CD4-positive, alpha-beta T cell (primary cell): ENCODE measurements at regions of chr6 and their contacts with region 1.

Region 1: GRCh38 chr6:26025894-26026832 is 61.1 kb upstream of the HFE start:
- DNase-seq: peak; percentile 75 to 98 (median 88)
- ATAC-seq: peak; percentile 45
- H3K4me3 ChIP-seq: peak overlapping the region; percentile 70
- H3K4me3 Mint-ChIP-seq: peak overlapping the region; percentile 90
- H3K27ac ChIP-seq: peak overlapping the region; percentile 86 to 88
- H3K27ac Mint-ChIP-seq: peak overlapping the region; percentile 97
- H3K4me1 ChIP-seq: peaks cover 34% of the 10 kb centered on the region
- H3K4me1 Mint-ChIP-seq: peaks cover 42% of the 10 kb centered on the region
- H3K27me3 ChIP-seq: no peaks in the 10 kb centered on the region
- H3K27me3 Mint-ChIP-seq: no peaks in the 10 kb centered on the region
- CTCF ChIP-seq: peak; percentile 86

Region 2: DNA sequence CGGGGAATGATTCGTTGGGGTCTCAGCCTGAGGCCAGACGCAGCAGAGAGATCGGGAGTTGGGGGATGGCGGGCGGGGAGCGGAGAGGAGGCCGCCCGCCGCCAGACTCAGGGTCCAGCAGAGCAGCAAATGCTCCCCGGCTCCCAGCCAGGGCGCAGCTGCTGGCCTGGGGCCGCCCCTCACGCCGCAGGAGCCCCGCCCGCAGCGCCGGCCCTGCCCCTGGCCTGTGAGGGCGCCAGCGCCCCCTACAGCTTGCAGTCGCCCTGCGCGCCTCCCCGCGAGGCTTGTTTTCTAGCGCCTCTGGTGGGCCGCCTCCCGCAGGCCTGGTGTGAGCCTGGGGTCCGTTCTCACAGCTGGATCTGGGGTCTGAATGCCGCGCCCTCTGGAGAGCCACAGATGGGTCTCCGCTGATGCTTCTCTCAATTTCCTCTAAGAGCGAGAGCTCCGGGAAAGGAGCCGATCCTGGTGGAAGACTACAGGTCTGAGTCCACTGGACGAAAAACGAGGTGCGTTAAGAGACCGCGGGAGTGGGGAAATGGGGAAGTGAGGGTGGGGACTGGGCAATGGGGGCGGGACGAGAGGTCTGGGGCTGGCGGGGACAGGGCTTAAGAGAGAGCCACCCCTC is 33.6 kb before region 1 on chr6:
- CTCF ChIA-PET with region 1: interaction called, 62 read pairs
- POLR2A ChIA-PET with region 1: interaction called, 103 read pairs
- intact Hi-C with region 1: no loop called
- DNase-seq: peak; percentile 84 to 96 (median 93)
- ATAC-seq: peak; percentile 95
- H3K4me3 ChIP-seq: peak overlapping the region; percentile 55
- H3K4me3 Mint-ChIP-seq: peak overlapping the region; percentile 97
- H3K27ac ChIP-seq: peak overlapping the region; percentile 31 to 69
- H3K27ac Mint-ChIP-seq: peak overlapping the region; percentile 97
- H3K4me1 ChIP-seq: peaks cover 15% of the 10 kb centered on the region
- H3K4me1 Mint-ChIP-seq: peaks cover 37% of the 10 kb centered on the region
- H3K27me3 ChIP-seq: no peaks in the 10 kb centered on the region
- H3K27me3 Mint-ChIP-seq: no peaks in the 10 kb centered on the region
- CTCF ChIP-seq: peak; percentile 100

Region 3: DNA sequence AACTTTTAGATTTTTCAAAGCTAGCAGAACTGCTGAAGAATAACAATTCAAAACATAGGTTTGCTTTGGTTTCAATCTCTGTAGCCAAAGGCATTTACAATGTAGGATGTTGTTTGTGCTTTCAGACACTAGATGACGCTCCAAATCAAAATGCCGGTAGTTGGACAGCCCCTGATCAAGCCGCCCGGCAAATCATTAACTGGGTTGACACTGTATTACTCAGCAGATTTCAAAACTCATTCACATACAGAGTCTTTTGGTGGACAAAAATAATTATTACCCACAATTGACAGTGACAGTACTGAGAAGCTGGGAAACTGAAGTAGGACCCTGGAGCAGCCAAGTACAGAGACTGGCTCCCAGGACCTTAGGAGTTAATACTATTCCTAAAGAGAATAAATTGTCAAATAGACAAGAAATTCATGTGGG is 39.8 kb after region 1 on chr6:
- CTCF ChIA-PET with region 1: interaction called, 10 read pairs
- POLR2A ChIA-PET with region 1: interaction called, 7 read pairs
- intact Hi-C with region 1: loop called in 1 of 2 experiments (anchors 5 kb)
- DNase-seq: peak in 11 of 14 experiments; percentile 14 to 87 (median 39)
- ATAC-seq: peak; percentile 93
- H3K4me3 ChIP-seq: no peak overlapping the region
- H3K4me3 Mint-ChIP-seq: no peak overlapping the region
- H3K27ac ChIP-seq: no peak overlapping the region
- H3K27ac Mint-ChIP-seq: no peak overlapping the region
- H3K4me1 ChIP-seq: peaks cover 3% of the 10 kb centered on the region
- H3K4me1 Mint-ChIP-seq: peaks cover 11% of the 10 kb centered on the region
- H3K27me3 ChIP-seq: no peaks in the 10 kb centered on the region
- H3K27me3 Mint-ChIP-seq: no peaks in the 10 kb centered on the region
- CTCF ChIP-seq: peak; percentile 85

Region 4: DNA sequence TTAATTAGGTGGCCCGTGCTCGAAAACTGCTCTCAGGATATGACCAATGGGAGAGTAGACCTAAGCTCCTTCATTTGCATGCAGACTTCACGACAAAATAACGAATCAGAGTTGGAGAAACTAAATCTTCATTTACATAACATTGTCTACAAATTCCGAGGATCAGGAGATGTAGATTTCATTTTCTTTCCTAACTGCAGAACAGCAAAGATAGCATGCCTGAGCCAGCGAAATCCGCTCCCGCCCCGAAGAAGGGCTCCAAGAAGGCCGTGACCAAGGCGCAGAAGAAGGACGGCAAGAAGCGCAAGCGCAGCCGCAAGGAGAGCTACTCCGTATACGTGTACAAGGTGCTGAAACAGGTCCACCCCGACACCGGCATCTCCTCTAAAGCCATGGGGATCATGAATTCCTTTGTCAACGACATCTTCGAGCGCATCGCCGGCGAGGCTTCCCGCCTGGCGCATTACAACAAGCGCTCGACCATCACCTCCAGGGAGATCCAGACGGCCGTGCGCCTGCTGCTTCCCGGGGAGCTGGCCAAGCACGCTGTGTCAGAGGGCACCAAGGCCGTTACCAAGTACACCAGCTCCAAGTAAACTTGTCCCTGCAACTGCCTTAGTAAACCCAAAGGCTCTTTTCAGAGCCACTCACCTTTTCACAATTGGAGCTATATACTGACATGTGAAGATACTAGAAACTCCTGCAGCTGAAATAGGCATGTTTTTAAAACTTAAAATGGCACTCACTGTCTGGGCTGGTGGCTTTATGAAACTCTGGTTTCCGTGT is 157.6 kb after region 1 on chr6:
- CTCF ChIA-PET with region 1: no interaction called
- POLR2A ChIA-PET with region 1: interaction called, 22 read pairs
- intact Hi-C with region 1: no loop called
- DNase-seq: peak in 13 of 14 experiments; percentile 20 to 94 (median 48)
- ATAC-seq: peak; percentile 89
- H3K4me3 ChIP-seq: peak overlapping the region; percentile 62
- H3K4me3 Mint-ChIP-seq: peak overlapping the region; percentile 99
- H3K27ac ChIP-seq: peak overlapping the region; percentile 43 to 72
- H3K27ac Mint-ChIP-seq: peak overlapping the region; percentile 86
- H3K4me1 ChIP-seq: peaks cover 34% of the 10 kb centered on the region
- H3K4me1 Mint-ChIP-seq: peaks cover 42% of the 10 kb centered on the region
- H3K27me3 ChIP-seq: no peaks in the 10 kb centered on the region
- H3K27me3 Mint-ChIP-seq: no peaks in the 10 kb centered on the region
- CTCF ChIP-seq: no peak

Region 5: GRCh38 chr6:26285143-26286134 is 259.3 kb after region 1 on chr6:
- CTCF ChIA-PET with region 1: no interaction called
- POLR2A ChIA-PET with region 1: interaction called, 10 read pairs
- intact Hi-C with region 1: no loop called
- DNase-seq: peak; percentile 85 to 99 (median 92)
- ATAC-seq: peak; percentile 82
- H3K4me3 ChIP-seq: peak overlapping the region; percentile 62
- H3K4me3 Mint-ChIP-seq: peak overlapping the region; percentile 87
- H3K27ac ChIP-seq: peak overlapping the region; percentile 82 to 85
- H3K27ac Mint-ChIP-seq: peak overlapping the region; percentile 96
- H3K4me1 ChIP-seq: peaks cover 16% of the 10 kb centered on the region
- H3K4me1 Mint-ChIP-seq: peaks cover 24% of the 10 kb centered on the region
- H3K27me3 ChIP-seq: no peaks in the 10 kb centered on the region
- H3K27me3 Mint-ChIP-seq: peaks cover 11% of the 10 kb centered on the region
- CTCF ChIP-seq: no peak

Region 6: DNA sequence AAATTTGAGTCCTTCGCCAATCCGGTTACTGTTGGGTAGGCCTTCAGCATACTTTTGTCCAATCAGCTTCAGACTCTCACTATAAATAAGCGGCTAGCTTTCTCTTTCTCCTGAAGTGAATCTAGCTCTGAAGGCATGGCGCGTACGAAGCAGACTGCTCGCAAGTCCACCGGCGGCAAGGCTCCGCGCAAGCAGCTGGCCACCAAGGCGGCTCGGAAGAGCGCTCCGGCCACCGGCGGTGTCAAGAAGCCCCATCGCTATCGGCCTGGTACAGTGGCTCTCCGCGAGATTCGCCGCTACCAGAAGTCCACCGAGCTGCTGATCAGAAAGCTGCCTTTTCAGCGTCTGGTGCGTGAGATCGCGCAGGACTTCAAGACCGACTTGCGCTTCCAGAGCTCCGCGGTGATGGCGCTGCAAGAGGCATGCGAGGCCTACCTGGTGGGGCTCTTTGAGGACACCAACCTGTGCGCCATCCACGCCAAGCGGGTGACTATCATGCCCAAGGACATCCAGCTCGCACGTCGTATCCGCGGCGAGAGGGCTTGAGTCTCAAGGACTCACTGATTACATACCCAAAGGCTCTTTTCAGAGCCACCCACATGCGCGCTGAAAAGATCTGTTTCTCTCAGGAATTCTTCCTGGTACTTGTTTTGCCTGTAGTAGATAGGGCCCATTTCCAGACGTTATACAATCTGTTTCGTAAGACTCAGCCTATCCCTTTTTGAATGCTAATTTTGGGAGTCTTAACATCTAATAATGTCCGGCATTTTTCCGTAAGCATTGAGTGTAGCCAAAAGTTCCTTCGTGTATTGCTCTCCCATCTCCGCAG is 1784.0 kb after region 1 on chr6:
- CTCF ChIA-PET with region 1: no interaction called
- POLR2A ChIA-PET with region 1: interaction called, 61 read pairs
- intact Hi-C with region 1: loop called in 1 of 2 experiments (anchors 5 kb)
- DNase-seq: peak; percentile 63 to 98 (median 75)
- ATAC-seq: peak; percentile 61
- H3K4me3 ChIP-seq: peak overlapping the region; percentile 64
- H3K4me3 Mint-ChIP-seq: peak overlapping the region; percentile 95
- H3K27ac ChIP-seq: peak overlapping the region; percentile 69 to 81
- H3K27ac Mint-ChIP-seq: peak overlapping the region; percentile 96
- H3K4me1 ChIP-seq: peaks cover 39% of the 10 kb centered on the region
- H3K4me1 Mint-ChIP-seq: peaks cover 68% of the 10 kb centered on the region
- H3K27me3 ChIP-seq: no peaks in the 10 kb centered on the region
- H3K27me3 Mint-ChIP-seq: no peaks in the 10 kb centered on the region
- CTCF ChIP-seq: no peak